H1 (cell line): ENCODE measurements at regions of chr6 and their contacts with region 1.

Region 1: GRCh38 chr6:40713001-40713960 is 126.1 kb upstream of the LRFN2 start:
- DNase-seq: no peak
- H3K4me3 ChIP-seq: no peak overlapping the region
- H3K27ac ChIP-seq: no peak overlapping the region
- H3K4me1 ChIP-seq: peaks cover 0 to 2% (median 0%) of the 10 kb centered on the region in 4 experiments; a peak in 2 of 7 replicates
- H3K27me3 ChIP-seq: no peaks in the 10 kb centered on the region; a peak in 1 of 7 replicates
- CTCF ChIP-seq: peak; percentile 26 to 45 (median 44); a peak in 3 of 4 replicates
- EP300 ChIP-seq: no peak
- POLR2A ChIP-seq: no peak
- RAD21 ChIP-seq: peak; percentile 52 to 65

Region 2: GRCh38 chr6:40654828-40655227 is 58.5 kb before region 1 on chr6:
- CTCF ChIA-PET with region 1: no interaction called
- POLR2A ChIA-PET with region 1: no interaction called
- DNase-seq: no peak
- H3K4me3 ChIP-seq: no peak overlapping the region
- H3K27ac ChIP-seq: no peak overlapping the region
- H3K4me1 ChIP-seq: no peaks in the 10 kb centered on the region
- H3K27me3 ChIP-seq: no peaks in the 10 kb centered on the region
- CTCF ChIP-seq: no peak
- EP300 ChIP-seq: no peak
- POLR2A ChIP-seq: no peak
- RAD21 ChIP-seq: no peak

Region 3: DNA sequence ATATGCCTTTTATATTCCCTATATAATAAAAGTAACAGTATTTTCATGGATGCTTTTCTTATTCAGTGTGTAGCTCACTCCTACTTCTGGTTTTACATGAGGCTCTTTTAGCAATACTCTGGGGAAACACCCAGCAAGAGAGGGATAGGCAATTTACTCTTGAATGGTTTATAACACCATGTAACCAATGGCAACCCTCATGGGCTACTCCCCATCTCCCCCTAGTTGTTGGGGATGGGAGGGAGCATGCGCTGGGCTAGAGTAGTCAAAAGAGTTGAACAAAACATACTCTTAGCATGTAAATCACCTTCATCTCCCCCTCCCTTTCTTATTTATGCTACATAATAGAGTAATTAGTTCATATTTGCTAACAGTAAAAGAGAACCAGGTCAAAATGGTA is 14.0 kb after region 1 on chr6:
- CTCF ChIA-PET with region 1: interaction called, 14 read pairs
- POLR2A ChIA-PET with region 1: no interaction called
- DNase-seq: no peak
- H3K4me3 ChIP-seq: no peak overlapping the region
- H3K27ac ChIP-seq: no peak overlapping the region
- H3K4me1 ChIP-seq: peaks cover 0 to 6% (median 4%) of the 10 kb centered on the region in 4 experiments; a peak in 6 of 7 replicates
- H3K27me3 ChIP-seq: no peaks in the 10 kb centered on the region
- CTCF ChIP-seq: peak in 2 of 3 experiments; percentile 52 to 65; a peak in 2 of 4 replicates
- EP300 ChIP-seq: no peak
- POLR2A ChIP-seq: no peak
- RAD21 ChIP-seq: peak in 1 of 2 experiments; percentile 34; a peak in 1 of 4 replicates

Region 4: DNA sequence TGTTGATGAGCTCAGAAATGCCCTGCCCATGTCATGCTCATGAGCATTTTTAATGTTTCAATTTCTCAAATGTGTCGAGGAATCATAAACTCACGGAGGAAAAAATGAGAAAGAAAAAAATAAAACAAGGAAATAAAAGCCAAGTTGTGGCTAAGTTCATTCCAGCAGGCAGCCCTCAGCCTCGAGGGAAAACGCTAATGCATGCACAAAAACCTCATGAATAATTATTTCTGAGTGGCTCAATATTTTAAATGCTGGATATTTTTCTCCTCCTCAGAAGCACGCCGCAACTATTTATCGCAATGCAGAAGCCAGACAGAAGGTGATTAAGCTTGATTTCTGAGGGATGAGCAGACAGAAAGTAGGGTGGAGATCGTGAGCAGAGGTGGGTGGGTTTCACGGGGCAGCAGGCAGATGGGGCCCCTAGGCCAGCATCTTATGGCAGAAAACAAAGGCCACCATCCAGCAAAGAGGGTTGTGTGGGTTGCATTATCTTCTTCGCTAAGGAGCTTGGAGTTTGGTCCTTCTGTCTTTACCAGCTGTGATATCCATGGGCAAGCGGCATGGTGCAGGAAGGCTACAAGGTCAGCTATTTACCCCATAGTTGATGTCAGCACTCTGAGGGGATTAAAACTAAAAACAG is 25.4 kb after region 1 on chr6:
- CTCF ChIA-PET with region 1: interaction called, 17 read pairs
- POLR2A ChIA-PET with region 1: no interaction called
- DNase-seq: no peak
- H3K4me3 ChIP-seq: no peak overlapping the region
- H3K27ac ChIP-seq: no peak overlapping the region
- H3K4me1 ChIP-seq: peaks cover 0 to 3% (median 0%) of the 10 kb centered on the region in 4 experiments; a peak in 1 of 7 replicates
- H3K27me3 ChIP-seq: 0 out of 7 replicates have a peak, but pooled peaks cover 0 to 4% (median 0%) of the 10 kb centered on the region in 4 experiments
- CTCF ChIP-seq: no peak
- EP300 ChIP-seq: no peak
- POLR2A ChIP-seq: no peak
- RAD21 ChIP-seq: no peak